ENCODE measurements at regions of chr12 and their contacts with region 1.

Region 1: DNA sequence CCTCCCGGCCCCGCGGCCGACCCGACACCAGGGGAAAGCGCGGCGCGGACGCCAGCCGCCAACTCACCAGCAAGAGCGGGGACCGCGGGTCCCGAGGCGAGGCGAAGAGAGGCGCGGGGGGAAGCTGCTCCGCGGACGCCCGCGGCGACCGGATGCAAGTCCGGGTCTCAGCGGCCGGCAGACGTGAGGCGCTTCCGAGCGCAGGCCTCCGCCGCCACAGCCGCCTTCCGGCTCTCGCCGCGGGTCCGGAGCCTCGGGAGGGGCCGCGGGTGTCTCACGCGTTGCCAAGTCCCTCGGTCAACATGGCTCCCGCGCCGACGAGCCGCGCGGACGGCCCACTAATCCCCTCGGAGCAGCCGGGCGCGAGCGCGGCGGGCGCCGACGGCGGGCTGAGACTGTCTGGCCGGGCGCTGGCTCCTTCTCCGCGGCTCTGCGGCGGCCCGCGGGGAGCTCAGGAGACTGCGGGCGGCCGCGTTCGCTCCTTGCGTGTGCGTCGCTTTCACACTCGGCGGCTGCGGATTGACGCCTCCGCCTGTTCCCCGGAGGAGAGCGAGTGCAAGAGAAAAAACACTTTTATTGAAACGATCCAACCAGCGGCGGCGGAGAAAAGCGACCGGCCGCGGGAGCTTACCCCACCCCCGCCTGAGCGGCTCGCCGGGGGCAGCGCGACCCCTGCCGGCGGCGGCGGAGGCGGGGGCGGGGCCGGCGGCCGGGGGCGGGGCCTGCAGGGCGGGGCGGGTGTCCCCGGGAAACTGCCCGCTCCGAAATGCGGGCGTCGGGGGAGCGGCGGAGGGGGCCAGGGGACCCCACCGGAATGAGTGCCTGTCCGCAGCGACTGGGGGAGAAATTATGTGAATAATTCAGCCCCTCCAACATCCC is at the start of gene CDK17:
- DNase-seq: peak; percentile 85 to 87
- ATAC-seq: peak; percentile 82 to 94 (median 88)
- H3K4me3 ChIP-seq: peak within 1 kb of the TSS; percentile 70 to 97 (median 90)
- H3K27ac ChIP-seq: peak within 1 kb of the TSS; percentile 92 to 100 (median 99)
- H3K4me1 ChIP-seq: peaks cover 0 to 48% (median 37%) of the 10 kb centered on the region in 9 donors
- H3K27me3 ChIP-seq: no peaks in the 10 kb centered on the region
- CTCF ChIP-seq: peak in 8 of 9 donors; percentile 37 to 77 (median 54)
- total RNA-seq, gene CDK17: 14.5 to 32.4 (median 21.7) TPM

Region 2: DNA sequence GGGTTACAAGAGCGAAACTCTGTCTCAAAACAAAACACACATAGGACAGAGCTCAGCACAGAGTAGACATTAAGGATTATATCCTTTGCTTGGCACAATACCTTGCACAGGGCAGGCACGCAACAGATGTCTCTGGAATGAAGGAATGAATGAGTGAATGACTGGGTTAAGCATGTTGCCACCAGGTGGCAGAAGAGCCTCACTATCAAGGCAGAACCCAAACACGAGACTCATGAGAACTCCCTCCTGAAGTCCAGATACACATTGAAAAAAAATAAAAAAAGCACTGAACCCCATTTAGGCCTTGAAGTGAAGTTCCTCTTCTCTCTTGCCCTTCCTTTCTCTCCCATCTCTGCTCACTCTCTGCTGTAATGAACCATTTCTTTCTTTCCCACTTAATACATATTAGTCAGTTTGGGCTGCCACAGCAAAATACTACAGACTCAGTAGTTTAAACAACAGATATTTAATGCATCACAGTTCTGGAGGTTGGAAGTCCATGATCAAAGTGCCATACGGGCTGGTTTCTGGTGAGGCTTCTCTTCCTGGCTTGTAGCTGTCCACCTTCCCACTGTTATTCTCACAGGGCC is 338.2 kb before region 1 on chr12:
- intact Hi-C with region 1: loop called in 6 of 10 experiments (anchors 5 to 10 kb)
- DNase-seq: peak; percentile 37 to 80
- ATAC-seq: peak; percentile 75 to 89 (median 84)
- H3K4me3 ChIP-seq: no peak overlapping the region
- H3K27ac ChIP-seq: peak overlapping the region in 1 of 10 donors; percentile 36
- H3K4me1 ChIP-seq: peaks cover 0 to 32% (median 17%) of the 10 kb centered on the region in 9 donors
- H3K27me3 ChIP-seq: no peaks in the 10 kb centered on the region
- CTCF ChIP-seq: peak; percentile 79 to 91 (median 87)

Region 3: GRCh38 chr12:96237465-96238077 is 162.6 kb before region 1 on chr12:
- intact Hi-C with region 1: loop called in 6 of 10 experiments (anchors 5 to 10 kb)
- DNase-seq: peak; percentile 52 to 75
- ATAC-seq: peak in 6 of 8 donors; percentile 7 to 40 (median 11)
- H3K4me3 ChIP-seq: no peak overlapping the region
- H3K27ac ChIP-seq: peak overlapping the region; percentile 41 to 86 (median 74)
- H3K4me1 ChIP-seq: peaks cover 64 to 100% (median 97%) of the 10 kb centered on the region in 9 donors
- H3K27me3 ChIP-seq: no peaks in the 10 kb centered on the region
- CTCF ChIP-seq: no peak

Region 4: DNA sequence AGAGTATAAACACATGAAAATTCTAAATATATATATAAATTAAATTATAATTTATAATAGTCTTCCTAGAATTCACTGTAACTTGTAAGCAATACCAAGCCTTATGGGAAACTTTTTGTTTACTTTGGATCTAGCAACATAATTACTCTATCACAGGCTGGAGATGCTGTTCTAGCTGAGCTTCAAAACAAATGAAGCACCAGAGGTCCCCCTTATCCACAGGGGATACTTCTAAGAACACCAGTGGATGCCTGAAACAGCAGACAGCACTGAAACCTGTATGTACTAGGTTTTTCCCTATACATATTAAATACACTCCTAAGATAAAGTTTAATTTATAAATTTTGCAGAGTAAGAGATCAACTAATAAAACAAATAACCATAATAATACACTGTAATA is 96.5 kb before region 1 on chr12:
- intact Hi-C with region 1: loop called in 4 of 10 experiments (anchors 5 to 10 kb)
- DNase-seq: no peak
- ATAC-seq: peak in 6 of 8 donors; percentile 38 to 67 (median 58)
- H3K4me3 ChIP-seq: no peak overlapping the region
- H3K27ac ChIP-seq: no peak overlapping the region
- H3K4me1 ChIP-seq: peaks cover 0 to 13% (median 6%) of the 10 kb centered on the region in 9 donors
- H3K27me3 ChIP-seq: no peaks in the 10 kb centered on the region
- CTCF ChIP-seq: peak in 3 of 9 donors; percentile 18 to 44 (median 29)

Region 5: GRCh38 chr12:96343347-96343954 is 56.7 kb before region 1 on chr12:
- intact Hi-C with region 1: loop called in 1 of 10 experiments (anchors 10 kb)
- DNase-seq: no peak
- ATAC-seq: no peak
- H3K4me3 ChIP-seq: no peak overlapping the region
- H3K27ac ChIP-seq: no peak overlapping the region
- H3K4me1 ChIP-seq: peaks cover 0 to 50% (median 26%) of the 10 kb centered on the region in 9 donors
- H3K27me3 ChIP-seq: no peaks in the 10 kb centered on the region
- CTCF ChIP-seq: no peak

Region 6: DNA sequence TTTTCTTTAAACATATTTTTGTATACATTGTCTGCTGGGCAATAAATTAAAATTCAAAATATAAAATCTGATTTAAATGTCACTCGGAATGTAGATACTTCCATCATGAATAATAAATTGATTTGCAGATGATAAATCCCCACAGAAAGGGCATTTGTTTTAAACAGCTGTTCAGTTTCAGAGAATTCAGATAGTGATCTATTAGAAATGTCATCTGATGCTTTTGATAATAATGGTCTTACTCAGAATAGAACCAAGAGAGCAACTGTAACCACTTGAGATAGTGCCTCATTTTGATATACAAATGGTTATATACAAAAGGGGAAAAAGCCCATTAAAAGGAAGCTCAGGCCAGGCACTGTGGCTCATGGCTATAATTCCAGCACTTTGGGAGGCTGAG is 43.3 kb before region 1 on chr12:
- intact Hi-C with region 1: no loop called
- DNase-seq: no peak
- ATAC-seq: no peak
- H3K4me3 ChIP-seq: no peak overlapping the region
- H3K27ac ChIP-seq: no peak overlapping the region
- H3K4me1 ChIP-seq: peaks cover 0 to 88% (median 61%) of the 10 kb centered on the region in 9 donors
- H3K27me3 ChIP-seq: no peaks in the 10 kb centered on the region
- CTCF ChIP-seq: no peak

Region 7: GRCh38 chr12:96445691-96446583 is 45.8 kb after region 1 on chr12:
- intact Hi-C with region 1: loop called in 1 of 10 experiments (anchors 5 kb)
- DNase-seq: peak in 1 of 2 donors; percentile 69
- ATAC-seq: peak; percentile 91 to 97 (median 96)
- H3K4me3 ChIP-seq: peak overlapping the region in 1 of 10 donors; percentile 12
- H3K27ac ChIP-seq: peak overlapping the region; percentile 61 to 93 (median 84)
- H3K4me1 ChIP-seq: peaks cover 0 to 35% (median 16%) of the 10 kb centered on the region in 9 donors
- H3K27me3 ChIP-seq: no peaks in the 10 kb centered on the region
- CTCF ChIP-seq: no peak

Region 8: GRCh38 chr12:96501139-96501761 is 101.1 kb after region 1 on chr12:
- intact Hi-C with region 1: loop called in 5 of 10 experiments (anchors 5 to 10 kb)
- DNase-seq: peak; percentile 36 to 42
- ATAC-seq: peak; percentile 61 to 95 (median 86)
- H3K4me3 ChIP-seq: no peak overlapping the region
- H3K27ac ChIP-seq: peak overlapping the region; percentile 42 to 88 (median 76)
- H3K4me1 ChIP-seq: peaks cover 4 to 36% (median 21%) of the 10 kb centered on the region in 9 donors
- H3K27me3 ChIP-seq: no peaks in the 10 kb centered on the region
- CTCF ChIP-seq: no peak

Measured in heart right ventricle (tissue), 16 donors.